Naive thymus-derived CD4-positive, alpha-beta T cell (primary cell): ENCODE measurements at regions of chr19 and their contacts with region 1.

Region 1: GRCh38 chr19:33125929-33126388 is 6.0 kb upstream of the WDR88 start:
- DNase-seq: peak; percentile 14 to 68 (median 55)
- ATAC-seq: peak; percentile 96
- H3K4me3 ChIP-seq: no peak overlapping the region
- H3K4me3 Mint-ChIP-seq: no peak overlapping the region
- H3K27ac ChIP-seq: no peak overlapping the region
- H3K27ac Mint-ChIP-seq: peak overlapping the region in 4 of 9 donors; percentile 34 to 71 (median 60)
- H3K4me1 ChIP-seq: no peaks in the 10 kb centered on the region
- H3K4me1 Mint-ChIP-seq: peaks cover 0 to 9% (median 7%) of the 10 kb centered on the region in 7 donors
- H3K27me3 ChIP-seq: no peaks in the 10 kb centered on the region
- H3K27me3 Mint-ChIP-seq: no peaks in the 10 kb centered on the region

Region 2: GRCh38 chr19:33186431-33187182 is 60.6 kb after region 1 on chr19:
- CTCF ChIA-PET with region 1: interaction called, 8 read pairs
- POLR2A ChIA-PET with region 1: no interaction called
- intact Hi-C with region 1: loop called in 1 of 2 experiments (anchors 1 kb)
- DNase-seq: no peak
- ATAC-seq: peak; percentile 37
- H3K4me3 ChIP-seq: no peak overlapping the region
- H3K4me3 Mint-ChIP-seq: peak overlapping the region in 4 of 10 donors; percentile 6 to 69 (median 31)
- H3K27ac ChIP-seq: no peak overlapping the region
- H3K27ac Mint-ChIP-seq: no peak overlapping the region
- H3K4me1 ChIP-seq: peaks cover 0 to 6% of the 10 kb centered on the region in 2 donors
- H3K4me1 Mint-ChIP-seq: peaks cover 0 to 11% (median 9%) of the 10 kb centered on the region in 7 donors
- H3K27me3 ChIP-seq: no peaks in the 10 kb centered on the region
- H3K27me3 Mint-ChIP-seq: peaks cover under 1 to 16% (median 6%) of the 10 kb centered on the region in 5 donors

Region 3: DNA sequence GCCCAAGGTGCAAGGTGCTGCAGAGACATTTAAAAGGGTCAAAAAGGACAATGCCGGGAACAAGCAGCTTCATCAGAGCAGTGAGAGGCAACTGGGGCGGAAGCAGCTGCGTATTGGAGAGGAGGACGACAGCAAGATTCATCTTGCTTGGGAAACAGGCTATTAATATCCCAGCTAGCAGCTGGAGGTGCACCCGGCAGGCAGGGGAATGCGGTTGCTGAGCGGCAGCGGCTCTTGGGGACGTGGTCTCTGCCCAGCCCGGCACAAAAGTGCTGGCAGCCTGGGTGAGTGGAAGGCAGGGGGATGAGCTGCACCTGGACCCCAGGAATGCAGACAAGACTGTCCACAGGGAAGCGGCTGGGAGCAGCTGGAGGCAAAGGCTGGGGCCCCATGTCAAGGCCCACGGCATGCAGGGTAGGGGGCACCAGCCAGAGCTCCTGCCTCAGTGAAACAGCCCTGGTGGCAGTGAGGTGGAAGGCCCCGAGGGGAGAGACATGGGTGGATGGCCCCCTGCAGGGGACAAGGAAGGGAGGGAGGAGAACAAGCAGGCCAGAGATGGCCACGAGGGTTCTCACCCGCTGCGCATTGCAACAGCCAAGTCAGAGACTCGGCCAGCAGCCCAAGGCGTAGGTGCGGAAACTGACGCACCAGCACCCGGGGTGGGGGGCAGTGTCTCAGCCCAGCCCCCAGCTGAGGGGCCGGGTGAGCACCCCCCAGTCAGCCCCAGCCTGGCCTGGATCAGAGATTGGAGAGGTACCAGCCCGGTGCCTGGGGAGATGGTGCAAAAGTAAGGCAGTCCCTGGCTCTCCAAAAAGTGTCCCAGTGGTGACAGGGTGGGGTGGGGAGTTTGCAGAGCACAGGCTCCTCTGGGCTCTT is 361.2 kb after region 1 on chr19:
- CTCF ChIA-PET with region 1: no interaction called
- POLR2A ChIA-PET with region 1: no interaction called
- intact Hi-C with region 1: no loop called
- DNase-seq: no peak
- ATAC-seq: no peak
- H3K4me3 ChIP-seq: no peak overlapping the region
- H3K4me3 Mint-ChIP-seq: no peak overlapping the region
- H3K27ac ChIP-seq: no peak overlapping the region
- H3K27ac Mint-ChIP-seq: no peak overlapping the region
- H3K4me1 ChIP-seq: no peaks in the 10 kb centered on the region
- H3K4me1 Mint-ChIP-seq: no peaks in the 10 kb centered on the region
- H3K27me3 ChIP-seq: no peaks in the 10 kb centered on the region
- H3K27me3 Mint-ChIP-seq: no peaks in the 10 kb centered on the region